ENCODE measurements at regions of chr1 and their contacts with region 1.

Region 1: DNA sequence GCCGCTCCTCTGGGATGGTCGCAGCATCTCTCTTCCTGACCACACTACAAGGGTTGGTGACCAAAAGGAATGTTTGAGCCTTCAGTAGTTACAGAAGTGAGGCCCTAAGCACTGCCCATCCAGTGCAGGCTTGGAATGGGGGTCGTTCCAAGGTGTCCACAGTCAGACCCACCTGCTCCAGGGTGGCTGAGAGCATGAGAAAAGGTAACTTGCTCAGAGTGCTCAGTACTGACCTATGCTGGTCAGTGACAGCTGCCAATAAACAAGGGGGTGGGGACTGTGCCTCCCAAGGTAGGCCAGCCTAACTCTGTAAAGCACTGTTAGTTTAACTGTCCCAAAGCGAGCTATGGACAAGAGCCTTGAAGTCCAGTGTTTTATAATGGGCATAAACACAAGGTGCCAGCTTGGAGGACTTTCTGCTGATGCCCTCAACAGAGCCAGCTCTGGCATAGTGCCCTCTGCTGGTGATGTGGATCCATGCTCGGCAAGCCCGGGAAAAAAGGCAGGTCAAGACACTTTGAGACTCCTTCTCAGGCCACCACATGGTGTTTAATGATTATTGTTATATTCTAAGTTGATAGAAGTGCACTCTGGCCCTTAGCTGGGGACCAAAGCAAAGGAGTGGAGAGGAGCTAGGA is 78.1 kb upstream of the DNAH14 start:
- DNase-seq: peak; percentile 83
- ATAC-seq: peak; percentile 67
- H3K4me3 Mint-ChIP-seq: no peak overlapping the region
- H3K27ac Mint-ChIP-seq: no peak overlapping the region
- H3K4me1 Mint-ChIP-seq: peaks cover 32% of the 10 kb centered on the region
- H3K27me3 Mint-ChIP-seq: no peaks in the 10 kb centered on the region; the same call in 1 of the 2 replicates
- CTCF ChIP-seq: peak; percentile 68

Region 2: GRCh38 chr1:224632381-224632871 is 218.9 kb before region 1 on chr1:
- CTCF ChIA-PET with region 1: interaction called, 11 read pairs
- POLR2A ChIA-PET with region 1: no interaction called
- DNase-seq: no peak
- ATAC-seq: no peak
- H3K4me3 Mint-ChIP-seq: no peak overlapping the region
- H3K27ac Mint-ChIP-seq: no peak overlapping the region
- H3K4me1 Mint-ChIP-seq: peaks cover 41% of the 10 kb centered on the region
- H3K27me3 Mint-ChIP-seq: no peaks in the 10 kb centered on the region
- CTCF ChIP-seq: no peak

Region 3: DNA sequence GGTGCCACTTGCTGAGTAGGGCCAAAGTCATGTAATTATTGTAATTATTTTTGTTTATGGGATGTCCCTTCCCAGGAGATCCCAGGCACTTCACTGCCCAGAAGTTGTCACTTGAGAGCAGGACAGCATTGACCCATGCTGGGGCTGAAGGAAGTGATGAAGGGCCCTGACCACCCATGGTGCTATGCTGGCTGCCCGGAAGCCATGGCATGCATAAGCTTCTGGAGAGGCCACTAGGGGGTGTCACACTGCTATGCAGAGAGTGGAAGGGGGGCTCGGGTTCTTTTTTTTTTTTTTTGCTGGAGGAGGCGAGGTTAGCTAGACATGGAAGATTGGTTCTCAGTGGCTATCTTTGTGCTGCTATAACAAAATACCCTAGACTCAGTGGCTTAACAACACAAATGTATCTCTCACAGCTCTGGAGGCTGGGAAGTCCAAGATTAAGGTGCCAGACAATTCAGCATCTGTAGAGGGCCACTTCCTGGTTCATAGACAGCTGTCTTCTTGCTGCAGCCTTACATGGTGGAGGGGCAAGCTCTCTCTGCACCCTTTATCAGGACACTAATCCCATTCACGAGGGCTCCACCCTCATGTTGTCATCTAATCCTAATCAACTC is 150.3 kb before region 1 on chr1:
- CTCF ChIA-PET with region 1: interaction called, 131 read pairs
- POLR2A ChIA-PET with region 1: no interaction called
- DNase-seq: peak; percentile 73
- ATAC-seq: peak; percentile 82
- H3K4me3 Mint-ChIP-seq: no peak overlapping the region
- H3K27ac Mint-ChIP-seq: no peak overlapping the region
- H3K4me1 Mint-ChIP-seq: peaks cover 41% of the 10 kb centered on the region
- H3K27me3 Mint-ChIP-seq: no peaks in the 10 kb centered on the region
- CTCF ChIP-seq: peak; percentile 23; the same call in 1 of the 2 replicates

Region 4: GRCh38 chr1:224736619-224737352 is 114.5 kb before region 1 on chr1:
- CTCF ChIA-PET with region 1: interaction called, 42 read pairs
- POLR2A ChIA-PET with region 1: no interaction called
- DNase-seq: peak; percentile 19
- ATAC-seq: peak; percentile 44
- H3K4me3 Mint-ChIP-seq: no peak overlapping the region
- H3K27ac Mint-ChIP-seq: peak overlapping the region; percentile 47; the same call in 1 of the 2 replicates
- H3K4me1 Mint-ChIP-seq: peaks cover 76% of the 10 kb centered on the region
- H3K27me3 Mint-ChIP-seq: no peaks in the 10 kb centered on the region
- CTCF ChIP-seq: no peak

Region 5: DNA sequence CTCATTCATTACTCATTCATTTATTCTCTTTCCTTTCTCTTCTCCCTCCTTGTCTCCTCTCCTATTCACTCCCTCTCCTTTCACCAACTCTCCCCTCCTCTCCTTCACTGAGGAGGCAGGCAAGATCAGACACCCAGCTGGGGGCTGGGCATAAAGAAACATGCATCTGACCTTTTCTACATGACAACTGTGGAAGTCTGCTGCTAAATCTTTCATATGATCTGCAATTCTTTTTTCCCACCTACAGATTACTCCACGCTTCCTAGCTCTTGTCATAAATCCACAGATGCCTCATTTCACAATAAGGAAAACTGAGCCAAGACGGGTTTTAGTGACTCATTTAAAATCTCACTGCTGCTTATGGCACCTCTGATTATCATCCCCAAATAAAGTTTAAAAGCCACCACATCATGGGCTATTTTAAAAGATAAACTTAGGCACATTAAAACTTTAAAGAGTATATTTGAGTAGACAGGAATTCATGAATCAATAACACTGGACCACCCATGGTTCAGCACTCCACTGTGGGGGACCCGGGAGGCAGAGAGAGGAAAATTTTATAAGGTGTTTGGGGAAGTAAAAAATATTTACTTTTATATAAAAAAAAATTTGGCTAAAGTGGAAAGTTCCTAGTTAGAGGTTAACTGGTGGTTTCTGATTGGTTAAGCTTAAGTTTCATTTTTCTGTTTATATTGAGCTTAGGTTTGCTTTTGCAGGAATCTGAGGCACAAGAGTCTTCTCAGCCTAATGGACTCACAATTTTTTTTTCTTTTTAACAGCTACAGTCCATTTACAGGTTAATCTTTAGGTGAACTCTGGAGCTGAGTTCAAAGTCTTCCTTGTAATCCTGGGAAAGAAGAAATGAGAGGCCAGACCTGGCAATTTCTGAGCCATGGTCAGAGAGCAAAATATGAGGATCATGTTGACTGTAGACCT is 22.4 kb after region 1 on chr1:
- CTCF ChIA-PET with region 1: interaction called, 21 read pairs
- POLR2A ChIA-PET with region 1: no interaction called
- DNase-seq: no peak
- ATAC-seq: peak; percentile 70
- H3K4me3 Mint-ChIP-seq: no peak overlapping the region
- H3K27ac Mint-ChIP-seq: no peak overlapping the region
- H3K4me1 Mint-ChIP-seq: peaks cover 20% of the 10 kb centered on the region
- H3K27me3 Mint-ChIP-seq: no peaks in the 10 kb centered on the region; the same call in 1 of the 2 replicates
- CTCF ChIP-seq: no peak

Region 6: DNA sequence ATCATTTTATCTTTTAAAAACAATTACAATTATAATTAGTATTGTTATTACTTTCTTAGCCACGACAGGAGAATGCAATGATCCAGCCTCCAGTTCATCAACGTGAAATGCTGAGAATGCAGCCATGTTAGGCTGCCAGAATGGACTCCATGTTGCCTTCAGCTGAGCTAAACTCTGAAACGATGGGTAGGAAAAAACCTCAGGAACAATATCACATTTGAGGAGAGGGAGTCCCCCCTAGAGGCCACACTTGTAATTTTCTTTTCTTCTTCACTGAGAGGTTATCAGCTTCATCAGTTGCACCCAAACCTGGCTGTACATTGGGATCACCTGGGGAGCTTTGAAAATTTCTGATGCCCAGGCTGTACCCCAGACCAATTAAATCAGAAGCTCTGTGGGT is 43.6 kb after region 1 on chr1:
- CTCF ChIA-PET with region 1: interaction called, 33 read pairs
- POLR2A ChIA-PET with region 1: no interaction called
- DNase-seq: no peak
- ATAC-seq: peak; percentile 96
- H3K4me3 Mint-ChIP-seq: no peak overlapping the region
- H3K27ac Mint-ChIP-seq: no peak overlapping the region
- H3K4me1 Mint-ChIP-seq: no peaks in the 10 kb centered on the region
- H3K27me3 Mint-ChIP-seq: no peaks in the 10 kb centered on the region; the same call in 1 of the 2 replicates
- CTCF ChIP-seq: peak; percentile 46

Measured in WTC11 (cell line).